Activated naive CD4-positive, alpha-beta T cell treated with anti-CD3 and anti-CD28 coated beads for 36 hours (primary cell): ENCODE measurements at regions of chr12 and their contacts with region 1.

Region 1: GRCh38 chr12:45170456-45171042 is 45.3 kb upstream of the ANO6 start:
- DNase-seq: peak; percentile 92
- H3K4me3 Mint-ChIP-seq: no peak overlapping the region
- H3K27ac Mint-ChIP-seq: no peak overlapping the region
- H3K4me1 Mint-ChIP-seq: no peaks in the 10 kb centered on the region
- H3K27me3 Mint-ChIP-seq: no peaks in the 10 kb centered on the region

Region 2: DNA sequence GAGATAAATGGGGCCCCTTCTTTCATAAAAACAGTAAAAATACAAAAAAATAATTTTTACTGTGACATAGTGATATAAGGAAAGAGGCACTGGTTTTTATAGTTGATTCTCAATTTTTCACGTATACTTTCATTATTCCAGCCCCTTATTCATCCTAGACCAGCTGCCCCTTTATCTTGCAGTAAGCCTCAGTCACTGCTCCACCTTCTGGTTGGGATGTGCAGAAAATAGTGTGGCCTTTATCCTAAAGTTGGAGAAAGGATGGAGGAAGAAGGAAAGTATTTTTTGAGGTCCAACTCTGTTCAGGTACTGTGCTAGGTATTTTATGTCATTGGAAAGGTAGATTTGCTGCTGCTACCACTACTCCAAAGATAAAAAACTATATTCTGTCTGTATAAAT is 218.0 kb after region 1 on chr12:
- CTCF ChIA-PET with region 1: interaction called, 5 read pairs
- intact Hi-C with region 1: loop called (anchors 1 kb)
- DNase-seq: peak; percentile 24
- H3K4me3 Mint-ChIP-seq: no peak overlapping the region
- H3K27ac Mint-ChIP-seq: no peak overlapping the region
- H3K4me1 Mint-ChIP-seq: no peaks in the 10 kb centered on the region
- H3K27me3 Mint-ChIP-seq: no peaks in the 10 kb centered on the region

Region 3: DNA sequence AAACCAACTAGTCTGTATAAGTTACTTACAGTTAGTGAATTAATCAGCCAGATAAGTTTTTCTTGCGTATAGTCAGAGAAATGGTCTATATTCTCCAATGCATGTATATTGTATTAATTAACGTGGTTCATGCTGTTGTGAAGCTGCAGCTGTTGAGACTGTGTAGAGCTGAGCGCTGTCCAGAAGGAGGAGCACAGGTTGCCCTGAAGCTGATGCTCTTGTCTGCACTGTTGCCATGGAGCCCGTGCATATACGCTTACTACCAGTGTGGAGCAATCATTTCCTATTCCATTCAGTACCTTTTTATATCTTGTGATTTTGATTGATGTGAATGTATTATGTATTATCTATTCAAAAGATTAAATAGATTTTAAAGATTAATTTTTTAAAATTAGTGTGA is 484.7 kb after region 1 on chr12:
- CTCF ChIA-PET with region 1: no interaction called
- intact Hi-C with region 1: no loop called
- DNase-seq: peak; percentile 70
- H3K4me3 Mint-ChIP-seq: no peak overlapping the region
- H3K27ac Mint-ChIP-seq: no peak overlapping the region
- H3K4me1 Mint-ChIP-seq: peaks cover 2% of the 10 kb centered on the region
- H3K27me3 Mint-ChIP-seq: peaks cover 2% of the 10 kb centered on the region